ENCODE measurements at regions of chr10 and their contacts with region 1.

Region 1: GRCh38 chr10:128211953-128212727 is 85.9 kb upstream of the MKI67 start:
- DNase-seq: peak; percentile 82
- ATAC-seq: peak; percentile 90
- H3K4me3 Mint-ChIP-seq: peak overlapping the region; percentile 80
- H3K27ac Mint-ChIP-seq: peak overlapping the region; percentile 56
- H3K4me1 Mint-ChIP-seq: peaks cover 11% of the 10 kb centered on the region
- H3K27me3 Mint-ChIP-seq: peaks cover 9% of the 10 kb centered on the region
- CTCF ChIP-seq: peak; percentile 74

Region 2: GRCh38 chr10:127906548-127907377 is 305.4 kb before region 1 on chr10 and contains the start of gene PTPRE:
- CTCF ChIA-PET with region 1: no interaction called
- POLR2A ChIA-PET with region 1: no interaction called
- intact Hi-C with region 1: loop called (anchors 2 kb)
- DNase-seq: peak; percentile 71
- ATAC-seq: peak; percentile 98
- H3K4me3 Mint-ChIP-seq: peak within 1 kb of the TSS; percentile 29
- H3K27ac Mint-ChIP-seq: no peak within 1 kb of the TSS
- H3K4me1 Mint-ChIP-seq: no peaks in the 10 kb centered on the region
- H3K27me3 Mint-ChIP-seq: peaks cover 47% of the 10 kb centered on the region
- CTCF ChIP-seq: no peak
- total RNA-seq, gene PTPRE: 28.2 and 36.8 TPM in 2 replicates

Region 3: GRCh38 chr10:128078136-128078969 is 133.8 kb before region 1 on chr10:
- CTCF ChIA-PET with region 1: no interaction called
- POLR2A ChIA-PET with region 1: no interaction called
- intact Hi-C with region 1: loop called (anchors 1 kb)
- DNase-seq: peak; percentile 47
- ATAC-seq: peak; percentile 72
- H3K4me3 Mint-ChIP-seq: no peak overlapping the region
- H3K27ac Mint-ChIP-seq: no peak overlapping the region
- H3K4me1 Mint-ChIP-seq: no peaks in the 10 kb centered on the region
- H3K27me3 Mint-ChIP-seq: no peaks in the 10 kb centered on the region
- CTCF ChIP-seq: peak; percentile 53

Region 4: DNA sequence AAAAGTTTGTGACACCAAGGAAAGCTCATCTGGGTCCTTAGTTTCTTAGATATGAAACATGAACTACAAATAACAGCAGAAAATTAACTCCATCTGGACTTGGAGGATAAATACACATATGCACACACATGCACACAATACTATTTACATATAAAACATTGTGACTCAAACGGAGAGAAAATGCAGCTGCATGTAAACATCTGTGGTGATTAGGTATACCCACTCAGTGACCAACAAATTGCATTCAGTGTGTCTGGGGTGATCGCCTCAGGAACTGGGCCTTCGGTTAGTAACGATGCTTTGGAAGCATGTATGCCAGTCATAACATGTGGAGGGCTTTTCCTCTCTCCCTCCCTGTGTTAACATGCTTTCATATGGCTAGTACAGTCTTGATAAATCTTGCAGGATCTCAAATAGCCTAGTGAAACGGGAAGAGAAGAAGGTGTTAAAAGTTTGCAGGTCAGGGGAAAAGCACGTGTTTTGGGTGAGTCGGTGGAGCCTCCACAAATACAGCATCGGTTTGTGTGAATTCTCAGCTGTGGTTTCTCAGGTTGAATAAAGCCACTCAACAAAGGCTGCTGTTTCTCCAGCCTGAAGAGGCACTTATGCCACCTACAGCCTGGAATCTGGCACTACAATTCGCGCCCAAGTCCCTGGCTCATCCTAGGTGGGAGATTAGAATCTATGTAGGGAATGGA is 1915.4 kb after region 1 on chr10:
- CTCF ChIA-PET with region 1: interaction called, 4 read pairs
- POLR2A ChIA-PET with region 1: no interaction called
- intact Hi-C with region 1: loop called (anchors 5 kb)
- DNase-seq: no peak
- ATAC-seq: peak; percentile 85
- H3K4me3 Mint-ChIP-seq: no peak overlapping the region
- H3K27ac Mint-ChIP-seq: no peak overlapping the region
- H3K4me1 Mint-ChIP-seq: peaks cover 4% of the 10 kb centered on the region
- H3K27me3 Mint-ChIP-seq: peaks cover 35% of the 10 kb centered on the region
- CTCF ChIP-seq: no peak